Heart right ventricle (tissue), 16 donors: ENCODE measurements at regions of chr18 and their contacts with region 1.

Region 1: GRCh38 chr18:56902653-56903052 is 244.2 kb upstream of the BOD1L2 start:
- DNase-seq: no peak
- ATAC-seq: no peak
- H3K4me3 ChIP-seq: no peak overlapping the region
- H3K27ac ChIP-seq: peak overlapping the region in 2 of 10 donors; percentile 9 to 32
- H3K4me1 ChIP-seq: peaks cover 0 to 23% (median 13%) of the 10 kb centered on the region in 9 donors
- H3K27me3 ChIP-seq: no peaks in the 10 kb centered on the region
- CTCF ChIP-seq: no peak

Region 2: DNA sequence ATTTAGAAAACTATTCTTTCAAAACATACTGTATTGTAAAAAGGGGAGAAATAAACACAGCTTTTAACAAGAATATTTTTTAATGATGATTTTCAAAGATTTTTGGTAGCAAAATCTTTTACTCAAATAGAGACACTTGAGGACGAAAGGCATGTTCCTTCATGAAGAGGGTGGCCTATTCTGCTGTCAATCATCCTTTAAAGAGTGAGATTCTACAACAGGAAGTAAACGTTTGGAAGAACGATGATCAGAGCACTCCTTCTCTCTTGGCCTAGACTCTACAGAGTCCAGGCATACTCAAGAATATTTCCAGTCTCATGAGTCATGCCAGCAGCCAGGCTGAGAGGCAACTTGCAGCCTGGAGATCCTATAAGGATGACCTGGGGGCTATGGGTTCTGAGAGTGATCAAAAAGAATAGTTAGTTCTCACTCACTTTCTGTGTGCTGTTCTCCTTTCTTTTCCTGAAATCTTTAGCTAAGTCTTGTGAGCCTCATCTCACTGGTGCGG is 1252.2 kb before region 1 on chr18:
- intact Hi-C with region 1: loop called in 1 of 10 experiments (anchors 10 kb)
- DNase-seq: no peak
- ATAC-seq: no peak
- H3K4me3 ChIP-seq: no peak overlapping the region
- H3K27ac ChIP-seq: no peak overlapping the region
- H3K4me1 ChIP-seq: peaks cover 0 to 7% (median 0%) of the 10 kb centered on the region in 9 donors
- H3K27me3 ChIP-seq: no peaks in the 10 kb centered on the region
- CTCF ChIP-seq: no peak

Region 3: GRCh38 chr18:56844556-56844955 is 58.1 kb before region 1 on chr18:
- intact Hi-C with region 1: no loop called
- DNase-seq: no peak
- ATAC-seq: no peak
- H3K4me3 ChIP-seq: no peak overlapping the region
- H3K27ac ChIP-seq: no peak overlapping the region
- H3K4me1 ChIP-seq: no peaks in the 10 kb centered on the region
- H3K27me3 ChIP-seq: no peaks in the 10 kb centered on the region
- CTCF ChIP-seq: no peak

Region 4: DNA sequence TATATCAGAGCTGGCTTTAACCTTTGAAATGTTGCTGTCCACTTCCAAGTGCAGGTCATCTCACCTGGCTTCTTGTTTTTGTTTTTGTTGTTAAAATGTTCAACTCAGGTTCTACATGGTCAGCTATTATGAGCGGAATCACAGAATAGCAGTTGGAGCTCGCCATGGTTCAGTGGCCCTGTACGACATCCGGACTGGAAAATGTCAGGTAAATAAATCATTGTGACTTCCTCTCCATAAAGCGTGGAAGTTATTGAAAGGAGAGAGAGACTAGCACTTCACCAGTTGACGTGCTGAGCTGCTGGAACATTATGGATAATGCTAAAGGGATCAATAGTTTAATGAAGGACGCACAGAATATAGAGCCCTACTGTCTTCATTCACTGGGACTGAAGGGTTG is 59.7 kb after region 1 on chr18:
- intact Hi-C with region 1: no loop called
- DNase-seq: no peak
- ATAC-seq: no peak
- H3K4me3 ChIP-seq: no peak overlapping the region
- H3K27ac ChIP-seq: no peak overlapping the region
- H3K4me1 ChIP-seq: no peaks in the 10 kb centered on the region
- H3K27me3 ChIP-seq: no peaks in the 10 kb centered on the region
- CTCF ChIP-seq: no peak